Activated naive CD4-positive, alpha-beta T cell treated with anti-CD3 and anti-CD28 coated beads for 36 hours (primary cell): ENCODE measurements at regions of chr18 and their contacts with region 1.

Region 1: DNA sequence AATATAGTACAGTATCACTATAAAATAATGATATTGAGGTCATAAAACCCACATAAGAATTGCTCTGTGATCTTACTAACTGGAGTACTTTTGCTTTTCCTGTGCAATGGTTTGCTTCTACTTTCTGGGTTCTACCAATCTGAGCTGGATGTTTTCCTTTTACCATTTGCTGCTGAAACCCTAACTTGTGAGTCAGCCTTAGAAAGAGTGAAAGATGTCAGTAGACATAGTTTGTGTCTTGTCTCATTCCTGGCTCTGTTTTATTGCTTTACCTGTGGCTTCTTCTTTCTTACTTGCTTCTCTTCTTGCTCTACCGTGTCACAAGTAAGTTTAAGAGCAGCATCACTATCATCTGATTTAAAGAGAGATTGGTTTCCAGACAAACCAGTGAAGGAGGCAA is 61.0 kb downstream of the MBD2 start:
- DNase-seq: no peak
- H3K4me3 Mint-ChIP-seq: no peak overlapping the region
- H3K27ac Mint-ChIP-seq: peak overlapping the region; percentile 87
- H3K4me1 Mint-ChIP-seq: peaks cover 21% of the 10 kb centered on the region
- H3K27me3 Mint-ChIP-seq: no peaks in the 10 kb centered on the region

Region 2: DNA sequence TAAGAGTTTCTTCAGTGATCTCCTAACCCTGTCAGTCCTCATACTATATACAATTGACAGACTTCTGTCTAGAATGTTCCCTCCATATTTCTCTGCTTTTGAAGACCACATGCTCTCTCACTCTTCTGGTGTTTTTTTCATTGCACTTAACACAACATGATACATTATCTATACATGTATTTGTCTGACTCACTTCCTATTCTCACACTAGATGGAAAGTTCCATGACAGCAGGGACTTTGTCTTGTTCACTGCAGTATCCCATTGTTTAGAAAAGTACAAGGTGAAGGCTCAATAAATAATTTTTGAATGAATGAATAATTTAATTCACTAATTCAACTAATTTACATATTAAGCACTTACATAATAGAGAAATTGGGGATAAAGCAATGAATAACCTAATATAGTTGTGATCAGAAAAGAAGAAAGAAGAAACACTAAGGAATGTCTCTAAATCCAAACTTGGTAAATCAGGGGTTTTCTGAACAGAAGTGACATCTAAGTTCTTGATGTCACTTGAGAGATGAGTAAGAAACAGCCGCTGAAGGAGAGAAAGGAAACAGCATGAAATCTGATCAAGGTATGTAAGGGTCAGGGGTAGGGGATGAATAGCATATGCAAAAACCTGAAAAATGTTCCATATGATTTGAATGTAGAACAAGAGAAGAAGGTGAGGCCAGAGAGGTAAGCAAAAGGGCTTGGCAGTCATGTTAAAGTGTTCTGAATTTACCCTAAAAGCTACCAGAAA is 18.6 kb after region 1 on chr18:
- CTCF ChIA-PET with region 1: interaction called, 4 read pairs
- intact Hi-C with region 1: loop called (anchors 1 kb)
- DNase-seq: peak; percentile 20
- H3K4me3 Mint-ChIP-seq: no peak overlapping the region
- H3K27ac Mint-ChIP-seq: no peak overlapping the region
- H3K4me1 Mint-ChIP-seq: peaks cover 9% of the 10 kb centered on the region
- H3K27me3 Mint-ChIP-seq: no peaks in the 10 kb centered on the region

Region 3: GRCh38 chr18:54209471-54210180 is 46.2 kb after region 1 on chr18:
- CTCF ChIA-PET with region 1: no interaction called
- intact Hi-C with region 1: loop called (anchors 1 kb)
- DNase-seq: no peak
- H3K4me3 Mint-ChIP-seq: peak overlapping the region; percentile 50
- H3K27ac Mint-ChIP-seq: peak overlapping the region; percentile 88
- H3K4me1 Mint-ChIP-seq: peaks cover 54% of the 10 kb centered on the region
- H3K27me3 Mint-ChIP-seq: no peaks in the 10 kb centered on the region

Region 4: DNA sequence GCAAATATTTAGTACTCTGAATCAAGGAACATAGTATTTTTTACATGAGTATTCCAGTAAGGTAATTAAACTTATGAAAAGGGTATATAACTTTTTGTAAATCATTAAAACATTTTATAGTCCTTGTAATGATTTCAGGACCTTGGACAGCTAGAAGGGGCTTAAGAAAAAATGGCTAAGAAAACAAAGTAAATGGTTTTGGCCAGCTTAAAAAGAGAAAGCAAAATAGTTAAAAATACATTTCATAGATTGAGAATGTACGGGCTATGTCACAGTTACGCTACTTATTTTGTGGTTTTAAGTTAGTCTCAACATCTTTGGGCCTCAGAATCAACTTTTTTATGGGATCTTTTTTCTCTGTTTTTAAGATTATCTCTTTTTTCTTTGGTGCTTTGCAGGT is 132.6 kb after region 1 on chr18:
- CTCF ChIA-PET with region 1: no interaction called
- intact Hi-C with region 1: no loop called
- DNase-seq: no peak
- H3K4me3 Mint-ChIP-seq: no peak overlapping the region
- H3K27ac Mint-ChIP-seq: no peak overlapping the region
- H3K4me1 Mint-ChIP-seq: no peaks in the 10 kb centered on the region
- H3K27me3 Mint-ChIP-seq: no peaks in the 10 kb centered on the region

Region 5: GRCh38 chr18:54607215-54607934 is 443.9 kb after region 1 on chr18:
- CTCF ChIA-PET with region 1: no interaction called
- intact Hi-C with region 1: no loop called
- DNase-seq: no peak
- H3K4me3 Mint-ChIP-seq: no peak overlapping the region
- H3K27ac Mint-ChIP-seq: no peak overlapping the region
- H3K4me1 Mint-ChIP-seq: no peaks in the 10 kb centered on the region
- H3K27me3 Mint-ChIP-seq: peaks cover 1% of the 10 kb centered on the region

Region 6: DNA sequence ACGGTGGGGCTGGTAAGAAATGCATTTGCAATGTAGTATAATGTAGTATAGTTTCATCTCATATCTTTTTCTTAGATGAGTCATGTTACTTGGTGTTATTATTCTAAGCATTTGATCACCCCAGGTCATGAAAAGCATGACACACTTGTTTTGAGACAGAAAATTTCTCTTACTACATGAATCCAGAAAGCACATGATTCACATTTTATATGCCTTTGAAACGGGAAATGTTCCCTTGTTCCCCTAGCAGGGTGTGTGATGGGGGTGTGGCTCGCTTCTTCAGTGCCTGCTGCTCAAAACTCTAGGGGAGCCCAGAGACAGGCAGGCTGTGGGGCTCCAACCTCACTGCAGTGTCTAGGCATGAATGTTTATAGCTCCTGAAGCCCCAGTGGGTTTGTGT is 548.9 kb after region 1 on chr18:
- CTCF ChIA-PET with region 1: no interaction called
- intact Hi-C with region 1: no loop called
- DNase-seq: peak; percentile 38
- H3K4me3 Mint-ChIP-seq: no peak overlapping the region
- H3K27ac Mint-ChIP-seq: no peak overlapping the region
- H3K4me1 Mint-ChIP-seq: peaks cover 26% of the 10 kb centered on the region
- H3K27me3 Mint-ChIP-seq: peaks cover 7% of the 10 kb centered on the region

Region 7: DNA sequence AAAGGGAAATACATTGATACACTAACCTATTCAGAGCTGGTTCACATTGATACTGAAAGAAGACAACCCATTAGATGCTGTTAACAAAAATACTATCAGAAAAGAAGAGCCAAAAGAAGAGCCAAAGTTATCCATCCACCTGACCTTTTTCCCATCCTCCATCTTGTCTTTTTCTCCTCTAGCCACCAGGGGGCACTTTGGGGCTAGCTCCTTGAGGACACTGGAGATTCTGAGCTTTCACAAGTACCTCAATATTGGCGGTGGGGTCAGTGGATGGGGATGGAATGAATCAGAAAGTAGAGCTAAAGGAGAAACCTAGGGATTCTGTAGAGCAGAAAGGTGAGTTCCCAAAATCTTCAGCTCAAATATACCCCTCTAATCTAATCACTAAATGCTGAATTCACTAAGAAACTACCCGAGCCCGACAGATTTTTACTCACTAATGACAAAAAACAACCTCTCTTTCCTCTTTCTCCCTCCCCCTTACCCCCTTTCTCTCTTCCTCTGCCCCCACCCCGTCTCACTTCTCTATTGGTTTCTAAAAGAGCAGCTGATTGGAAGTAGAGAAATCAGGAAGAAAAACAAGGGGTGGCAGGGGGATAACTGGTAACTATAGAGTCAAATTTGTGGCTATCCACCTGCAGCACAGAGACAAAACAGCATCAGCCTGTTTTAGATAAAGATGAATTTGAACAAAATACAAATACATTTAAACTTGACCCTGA is 1221.3 kb after region 1 on chr18:
- CTCF ChIA-PET with region 1: no interaction called
- intact Hi-C with region 1: no loop called
- DNase-seq: peak; percentile 16
- H3K4me3 Mint-ChIP-seq: no peak overlapping the region
- H3K27ac Mint-ChIP-seq: no peak overlapping the region
- H3K4me1 Mint-ChIP-seq: no peaks in the 10 kb centered on the region
- H3K27me3 Mint-ChIP-seq: no peaks in the 10 kb centered on the region